ENCODE measurements at regions of chr9 and their contacts with region 1.

Region 1: DNA sequence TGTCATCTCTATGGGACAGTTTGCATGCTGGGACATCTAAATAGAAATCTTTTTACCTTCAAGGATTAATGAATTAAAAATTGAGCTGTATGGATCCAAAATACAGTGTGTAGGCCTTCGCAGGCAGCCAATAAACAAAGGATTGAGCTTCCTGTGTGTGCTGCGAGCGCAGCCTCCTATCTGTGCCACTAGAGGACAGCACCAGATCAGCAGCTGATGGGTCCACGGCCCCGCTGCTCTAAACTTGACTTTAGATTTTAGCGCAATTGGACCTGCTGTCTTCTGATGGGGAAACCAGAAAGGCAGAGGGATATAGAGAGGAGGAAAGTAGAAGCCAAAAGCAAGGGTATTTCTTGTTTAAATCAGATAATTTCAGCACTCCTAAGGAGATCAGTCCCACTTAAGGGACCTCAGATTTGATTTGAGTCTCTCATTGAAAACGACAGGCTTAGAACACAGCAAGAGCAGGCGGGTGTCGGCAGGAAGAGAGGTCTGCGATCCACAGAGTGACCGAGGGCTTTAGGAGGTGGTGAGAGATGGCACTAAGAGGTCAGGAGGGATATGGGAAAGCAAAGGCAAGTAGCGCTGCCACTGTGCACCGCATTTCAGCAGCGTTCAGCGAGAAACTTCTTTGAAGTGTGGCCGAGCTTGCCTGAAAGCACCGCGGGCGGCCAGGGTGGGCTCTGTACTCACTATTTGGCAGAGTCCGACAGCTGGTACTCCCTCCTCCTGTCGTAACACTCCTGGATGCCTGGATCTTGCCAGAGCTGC is 214.3 kb downstream of the GNA14 start:
- DNase-seq: peak; percentile 55
- H3K4me3 ChIP-seq: no peak overlapping the region
- H3K27ac ChIP-seq: no peak overlapping the region
- H3K4me1 ChIP-seq: peaks cover 0 to 5% (median 0%) of the 10 kb centered on the region in 4 donors
- H3K27me3 ChIP-seq: no peaks in the 10 kb centered on the region
- CTCF ChIP-seq: peak; percentile 88 to 97 (median 92)
- EP300 ChIP-seq: no peak
- POLR2A ChIP-seq: no peak

Region 2: GRCh38 chr9:76023715-76024195 is 1410.1 kb before region 1 on chr9:
- in situ Hi-C with region 1: no loop called
- intact Hi-C with region 1: no loop called
- DNase-seq: no peak
- H3K4me3 ChIP-seq: no peak overlapping the region
- H3K27ac ChIP-seq: no peak overlapping the region
- H3K4me1 ChIP-seq: peaks cover 0 to 4% (median 1%) of the 10 kb centered on the region in 4 donors
- H3K27me3 ChIP-seq: no peaks in the 10 kb centered on the region
- CTCF ChIP-seq: no peak
- EP300 ChIP-seq: no peak
- POLR2A ChIP-seq: no peak

Region 3: GRCh38 chr9:77328102-77328501 is 105.8 kb before region 1 on chr9:
- in situ Hi-C with region 1: no loop called
- intact Hi-C with region 1: no loop called
- DNase-seq: no peak
- H3K4me3 ChIP-seq: no peak overlapping the region
- H3K27ac ChIP-seq: no peak overlapping the region
- H3K4me1 ChIP-seq: no peaks in the 10 kb centered on the region
- H3K27me3 ChIP-seq: no peaks in the 10 kb centered on the region
- CTCF ChIP-seq: no peak
- EP300 ChIP-seq: no peak
- POLR2A ChIP-seq: no peak

Region 4: DNA sequence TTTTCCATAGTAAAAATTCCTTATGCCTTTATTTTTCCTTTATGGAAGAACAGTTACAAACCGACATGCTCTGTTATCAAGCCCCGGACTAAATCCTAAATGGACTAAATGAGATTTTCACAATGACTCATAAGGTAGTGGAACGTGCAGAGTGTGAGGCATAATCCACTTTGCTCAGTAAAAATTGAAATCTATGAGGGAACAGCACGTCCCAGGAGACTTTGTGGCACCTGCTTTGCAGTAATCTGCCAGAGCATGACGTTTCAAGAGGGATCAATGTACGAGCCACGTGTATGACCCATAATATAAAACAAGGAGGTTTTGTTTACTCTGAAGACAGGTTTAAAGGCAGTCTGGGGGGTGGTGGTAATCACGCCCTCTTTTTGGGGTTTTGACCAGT is 298.1 kb after region 1 on chr9:
- in situ Hi-C with region 1: loop called in 3 of 4 experiments (anchors 25 kb)
- intact Hi-C with region 1: no loop called
- DNase-seq: peak; percentile 21
- H3K4me3 ChIP-seq: no peak overlapping the region
- H3K27ac ChIP-seq: no peak overlapping the region
- H3K4me1 ChIP-seq: peaks cover 0 to 11% (median 0%) of the 10 kb centered on the region in 4 donors
- H3K27me3 ChIP-seq: no peaks in the 10 kb centered on the region
- CTCF ChIP-seq: no peak
- EP300 ChIP-seq: no peak
- POLR2A ChIP-seq: no peak

Region 5: DNA sequence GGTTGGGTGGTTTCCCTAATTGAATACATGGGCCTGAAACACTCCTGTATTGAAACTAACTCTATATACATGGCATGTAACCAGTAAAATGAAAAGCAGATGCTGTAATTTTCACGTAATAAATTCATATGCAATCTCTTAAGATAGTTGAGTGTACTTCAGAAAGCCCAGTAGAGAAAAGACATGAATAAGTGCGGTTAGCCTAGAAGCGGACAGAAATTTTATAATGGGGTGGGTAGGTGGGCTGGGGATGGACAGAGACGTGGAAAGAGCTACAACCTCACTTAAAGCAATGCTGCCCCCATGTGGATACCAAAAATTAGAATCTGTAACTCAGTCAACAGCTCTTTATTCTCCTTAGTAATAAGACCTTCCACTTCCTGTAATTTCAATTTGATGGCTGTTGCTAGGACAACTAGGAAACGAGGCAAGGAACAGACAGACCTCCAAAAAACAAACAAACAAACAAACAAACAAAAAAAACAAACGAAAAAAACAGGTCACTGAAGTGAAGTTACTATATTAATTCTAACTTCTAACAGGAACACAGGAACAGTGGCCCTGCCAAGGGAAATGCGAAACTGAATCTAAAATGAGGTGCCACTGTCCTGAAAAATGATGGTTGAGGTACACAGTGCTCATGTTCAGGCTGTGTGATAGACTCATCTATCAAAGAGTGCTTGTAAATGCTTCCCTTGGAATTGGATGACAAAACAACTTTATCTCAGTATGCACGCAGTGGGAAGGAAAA is 317.7 kb after region 1 on chr9:
- in situ Hi-C with region 1: loop called in 3 of 4 experiments (anchors 25 kb)
- intact Hi-C with region 1: loop called (anchors 5 kb)
- DNase-seq: no peak
- H3K4me3 ChIP-seq: no peak overlapping the region
- H3K27ac ChIP-seq: peak overlapping the region; percentile 37 to 68 (median 62)
- H3K4me1 ChIP-seq: peaks cover 9 to 29% (median 20%) of the 10 kb centered on the region in 4 donors
- H3K27me3 ChIP-seq: no peaks in the 10 kb centered on the region
- CTCF ChIP-seq: peak; percentile 50 to 62 (median 54)
- EP300 ChIP-seq: no peak
- POLR2A ChIP-seq: no peak

Region 6: DNA sequence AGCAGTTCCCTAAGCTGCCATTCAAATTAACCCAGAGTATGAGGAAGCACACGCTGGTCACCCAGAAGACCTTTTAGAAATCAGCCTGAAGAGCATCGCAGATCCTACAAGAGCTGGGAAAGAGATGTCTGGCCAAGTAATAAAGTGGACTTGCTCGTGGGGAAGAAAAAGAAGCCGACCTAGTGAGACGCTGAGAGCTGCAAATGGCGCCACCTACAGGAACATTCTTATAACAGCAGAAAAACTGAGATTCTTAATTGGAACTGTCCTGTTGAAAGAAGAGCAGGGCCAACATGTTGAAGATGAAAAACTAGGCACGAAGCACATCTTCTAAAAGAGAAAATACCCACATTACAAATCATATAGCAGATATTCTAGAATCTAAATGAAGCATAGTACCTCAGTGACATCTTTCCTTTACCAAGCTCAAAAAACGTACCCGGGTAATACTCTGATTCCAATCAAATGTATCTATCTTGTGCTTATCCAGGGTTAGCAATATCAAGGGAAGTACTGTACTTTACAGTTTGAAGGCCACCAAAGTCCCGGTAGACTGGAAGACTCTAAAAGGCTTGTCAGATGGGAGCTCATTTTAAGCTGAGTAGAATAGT is 601.6 kb after region 1 on chr9:
- in situ Hi-C with region 1: loop called in 2 of 4 experiments (anchors 10 to 25 kb)
- intact Hi-C with region 1: loop called (anchors 5 kb)
- DNase-seq: peak; percentile 58
- H3K4me3 ChIP-seq: no peak overlapping the region
- H3K27ac ChIP-seq: peak overlapping the region; percentile 57 to 97 (median 79)
- H3K4me1 ChIP-seq: peaks cover 6 to 42% (median 21%) of the 10 kb centered on the region in 4 donors
- H3K27me3 ChIP-seq: no peaks in the 10 kb centered on the region
- CTCF ChIP-seq: peak; percentile 82 to 91 (median 85)
- EP300 ChIP-seq: no peak
- POLR2A ChIP-seq: no peak

Region 7: DNA sequence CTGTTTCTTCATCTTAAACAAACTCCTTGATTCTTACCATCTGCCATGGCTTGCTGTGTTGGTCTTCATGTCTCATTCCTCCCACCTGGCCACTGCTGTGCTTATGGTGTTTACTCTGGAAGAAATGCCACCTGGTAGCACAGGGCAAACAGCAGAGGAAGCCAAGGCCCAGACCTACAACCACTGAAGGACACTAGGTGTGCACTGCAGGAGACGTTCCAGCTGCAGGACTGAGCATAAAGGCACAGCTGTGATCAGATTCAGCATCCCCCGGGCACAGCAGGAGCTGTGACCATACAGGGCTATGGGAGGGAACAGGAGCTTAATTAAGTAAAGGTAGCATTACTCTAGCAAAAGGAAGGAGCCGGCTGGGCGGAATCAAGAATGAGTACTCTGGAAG is 610.3 kb after region 1 on chr9:
- in situ Hi-C with region 1: loop called in 2 of 4 experiments (anchors 10 to 25 kb)
- intact Hi-C with region 1: loop called (anchors 5 kb)
- DNase-seq: no peak
- H3K4me3 ChIP-seq: no peak overlapping the region
- H3K27ac ChIP-seq: no peak overlapping the region
- H3K4me1 ChIP-seq: peaks cover 0 to 5% (median 0%) of the 10 kb centered on the region in 4 donors
- H3K27me3 ChIP-seq: no peaks in the 10 kb centered on the region
- CTCF ChIP-seq: no peak
- EP300 ChIP-seq: no peak
- POLR2A ChIP-seq: no peak